CD8-positive, alpha-beta T cell (primary cell): ENCODE measurements at regions of chr12 and their contacts with region 1.

Region 1: DNA sequence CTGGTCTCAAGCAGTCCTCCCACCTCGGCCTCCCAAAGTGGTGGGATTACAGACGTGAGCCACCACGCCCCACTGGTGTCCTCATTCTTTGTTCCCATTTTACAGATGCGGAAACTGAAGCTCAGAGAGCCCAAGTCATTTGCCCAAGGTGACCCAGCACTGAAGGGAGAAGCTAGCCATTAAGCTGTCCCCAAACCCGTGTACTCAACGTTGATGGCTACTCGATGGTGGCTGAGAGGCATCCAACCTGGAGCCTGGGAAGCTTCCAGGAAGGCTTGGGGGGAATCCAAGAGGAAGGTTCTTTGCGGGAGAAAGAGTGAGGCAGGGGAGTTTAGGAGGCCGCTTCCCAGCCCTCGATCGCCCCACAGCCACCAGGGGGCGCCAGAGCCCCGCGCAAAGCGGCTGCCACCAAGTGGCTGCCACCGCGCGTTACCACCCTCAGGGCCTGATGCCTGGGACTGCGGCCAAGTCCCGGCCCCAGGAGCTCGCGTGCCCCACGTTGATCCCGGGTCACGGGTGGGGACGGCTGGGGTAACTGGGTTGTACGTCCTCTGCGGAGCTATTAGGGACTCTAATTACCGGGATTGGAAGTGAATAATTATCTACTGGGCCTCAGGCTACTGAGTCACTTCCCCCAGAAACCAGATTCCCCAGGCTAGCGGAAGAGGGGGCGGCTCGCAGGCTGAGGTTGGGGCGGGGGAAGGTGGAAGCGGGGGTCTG is 8.8 kb upstream of the SH2B3 start:
- DNase-seq: peak; percentile 75 to 95 (median 88)
- ATAC-seq: peak; percentile 94
- H3K4me3 ChIP-seq: peak overlapping the region; percentile 27 to 33
- H3K4me3 Mint-ChIP-seq: peak overlapping the region; percentile 70
- H3K27ac ChIP-seq: no peak overlapping the region
- H3K27ac Mint-ChIP-seq: no peak overlapping the region
- H3K4me1 ChIP-seq: peaks cover 9% of the 10 kb centered on the region
- H3K4me1 Mint-ChIP-seq: peaks cover 6% of the 10 kb centered on the region
- H3K27me3 ChIP-seq: no peaks in the 10 kb centered on the region
- H3K27me3 Mint-ChIP-seq: no peaks in the 10 kb centered on the region
- CTCF ChIP-seq: peak; percentile 97

Region 2: GRCh38 chr12:111238075-111238734 is 158.7 kb before region 1 on chr12:
- CTCF ChIA-PET with region 1: no interaction called
- POLR2A ChIA-PET with region 1: no interaction called
- intact Hi-C with region 1: no loop called
- DNase-seq: no peak
- ATAC-seq: no peak
- H3K4me3 ChIP-seq: no peak overlapping the region
- H3K4me3 Mint-ChIP-seq: no peak overlapping the region
- H3K27ac ChIP-seq: no peak overlapping the region
- H3K27ac Mint-ChIP-seq: no peak overlapping the region
- H3K4me1 ChIP-seq: no peaks in the 10 kb centered on the region
- H3K4me1 Mint-ChIP-seq: no peaks in the 10 kb centered on the region
- H3K27me3 ChIP-seq: no peaks in the 10 kb centered on the region
- H3K27me3 Mint-ChIP-seq: peaks cover 4% of the 10 kb centered on the region
- CTCF ChIP-seq: no peak

Region 3: DNA sequence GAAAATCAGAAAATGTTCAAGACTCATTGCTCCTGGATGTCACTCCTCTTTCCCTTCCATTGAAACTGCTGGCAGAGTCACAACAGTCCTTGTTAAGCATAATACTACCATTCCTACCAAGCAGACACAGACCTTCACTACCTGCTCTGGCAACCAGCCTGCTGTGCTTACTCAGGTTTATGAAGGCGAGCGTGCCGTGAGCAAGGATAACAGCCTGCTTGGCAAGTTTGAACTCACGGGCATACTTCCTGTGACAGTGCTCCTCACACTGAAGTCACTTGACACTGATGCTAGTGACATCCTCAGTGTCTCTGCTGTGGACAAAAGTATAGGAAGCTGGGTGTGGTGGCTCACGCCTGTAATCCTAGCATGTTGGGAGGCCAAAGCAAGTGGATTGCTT is 12.3 kb before region 1 on chr12:
- CTCF ChIA-PET with region 1: interaction called, 17 read pairs
- POLR2A ChIA-PET with region 1: interaction called, 3 read pairs
- intact Hi-C with region 1: no loop called
- DNase-seq: no peak
- ATAC-seq: no peak
- H3K4me3 ChIP-seq: no peak overlapping the region
- H3K4me3 Mint-ChIP-seq: no peak overlapping the region
- H3K27ac ChIP-seq: no peak overlapping the region
- H3K27ac Mint-ChIP-seq: no peak overlapping the region
- H3K4me1 ChIP-seq: no peaks in the 10 kb centered on the region
- H3K4me1 Mint-ChIP-seq: no peaks in the 10 kb centered on the region
- H3K27me3 ChIP-seq: no peaks in the 10 kb centered on the region
- H3K27me3 Mint-ChIP-seq: peaks cover 2% of the 10 kb centered on the region
- CTCF ChIP-seq: no peak

Region 4: GRCh38 chr12:111434680-111435338 is 37.9 kb after region 1 on chr12:
- CTCF ChIA-PET with region 1: interaction called, 1,191 read pairs
- POLR2A ChIA-PET with region 1: interaction called, 4 read pairs
- intact Hi-C with region 1: no loop called
- DNase-seq: peak; percentile 70 to 96 (median 87)
- ATAC-seq: peak; percentile 70
- H3K4me3 ChIP-seq: peak overlapping the region; percentile 34 to 39
- H3K4me3 Mint-ChIP-seq: peak overlapping the region; percentile 82
- H3K27ac ChIP-seq: peak overlapping the region; percentile 91 to 98
- H3K27ac Mint-ChIP-seq: peak overlapping the region; percentile 100
- H3K4me1 ChIP-seq: peaks cover 99% of the 10 kb centered on the region
- H3K4me1 Mint-ChIP-seq: peaks cover 93% of the 10 kb centered on the region
- H3K27me3 ChIP-seq: no peaks in the 10 kb centered on the region
- H3K27me3 Mint-ChIP-seq: no peaks in the 10 kb centered on the region
- CTCF ChIP-seq: no peak

Region 5: DNA sequence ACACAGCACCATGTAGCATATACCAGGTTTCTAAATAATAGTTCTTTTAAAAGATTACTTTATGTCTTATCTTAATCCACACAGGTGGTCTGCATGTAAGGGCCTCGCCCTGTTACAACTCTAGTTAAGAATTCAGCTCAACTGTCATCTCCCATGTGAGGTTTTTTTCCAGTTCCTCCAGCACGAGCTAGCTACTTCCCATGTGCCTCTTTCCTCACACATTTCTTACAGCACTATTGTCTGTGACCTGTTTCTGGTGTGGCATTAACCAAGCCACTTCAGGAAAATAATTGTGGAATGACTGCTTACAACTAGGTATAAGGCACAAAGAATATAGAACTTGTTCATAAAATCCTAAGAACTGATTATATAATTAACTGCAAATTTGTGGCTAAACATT is 74.3 kb after region 1 on chr12:
- CTCF ChIA-PET with region 1: interaction called, 13 read pairs
- POLR2A ChIA-PET with region 1: interaction called, 5 read pairs
- intact Hi-C with region 1: no loop called
- DNase-seq: no peak
- ATAC-seq: no peak
- H3K4me3 ChIP-seq: no peak overlapping the region
- H3K4me3 Mint-ChIP-seq: no peak overlapping the region
- H3K27ac ChIP-seq: no peak overlapping the region
- H3K27ac Mint-ChIP-seq: no peak overlapping the region
- H3K4me1 ChIP-seq: no peaks in the 10 kb centered on the region
- H3K4me1 Mint-ChIP-seq: no peaks in the 10 kb centered on the region
- H3K27me3 ChIP-seq: no peaks in the 10 kb centered on the region
- H3K27me3 Mint-ChIP-seq: no peaks in the 10 kb centered on the region
- CTCF ChIP-seq: no peak

Region 6: GRCh38 chr12:111529424-111530368 is 132.8 kb after region 1 on chr12:
- CTCF ChIA-PET with region 1: interaction called, 97 read pairs
- POLR2A ChIA-PET with region 1: no interaction called
- intact Hi-C with region 1: loop called (anchors 1 kb)
- DNase-seq: peak; percentile 8 to 82 (median 56)
- ATAC-seq: peak; percentile 80
- H3K4me3 ChIP-seq: no peak overlapping the region
- H3K4me3 Mint-ChIP-seq: no peak overlapping the region
- H3K27ac ChIP-seq: no peak overlapping the region
- H3K27ac Mint-ChIP-seq: no peak overlapping the region
- H3K4me1 ChIP-seq: no peaks in the 10 kb centered on the region
- H3K4me1 Mint-ChIP-seq: peaks cover 3% of the 10 kb centered on the region
- H3K27me3 ChIP-seq: no peaks in the 10 kb centered on the region
- H3K27me3 Mint-ChIP-seq: no peaks in the 10 kb centered on the region
- CTCF ChIP-seq: peak; percentile 87